Activated CD4-positive, alpha-beta T cell treated with anti-CD3 and anti-CD28 coated beads, Interleukin-2, amount 10 ng/mL, durations not matched to agents 24 days and 14 days (primary cell): ENCODE measurements at regions of chr6 and their contacts with region 1.

Region 1: DNA sequence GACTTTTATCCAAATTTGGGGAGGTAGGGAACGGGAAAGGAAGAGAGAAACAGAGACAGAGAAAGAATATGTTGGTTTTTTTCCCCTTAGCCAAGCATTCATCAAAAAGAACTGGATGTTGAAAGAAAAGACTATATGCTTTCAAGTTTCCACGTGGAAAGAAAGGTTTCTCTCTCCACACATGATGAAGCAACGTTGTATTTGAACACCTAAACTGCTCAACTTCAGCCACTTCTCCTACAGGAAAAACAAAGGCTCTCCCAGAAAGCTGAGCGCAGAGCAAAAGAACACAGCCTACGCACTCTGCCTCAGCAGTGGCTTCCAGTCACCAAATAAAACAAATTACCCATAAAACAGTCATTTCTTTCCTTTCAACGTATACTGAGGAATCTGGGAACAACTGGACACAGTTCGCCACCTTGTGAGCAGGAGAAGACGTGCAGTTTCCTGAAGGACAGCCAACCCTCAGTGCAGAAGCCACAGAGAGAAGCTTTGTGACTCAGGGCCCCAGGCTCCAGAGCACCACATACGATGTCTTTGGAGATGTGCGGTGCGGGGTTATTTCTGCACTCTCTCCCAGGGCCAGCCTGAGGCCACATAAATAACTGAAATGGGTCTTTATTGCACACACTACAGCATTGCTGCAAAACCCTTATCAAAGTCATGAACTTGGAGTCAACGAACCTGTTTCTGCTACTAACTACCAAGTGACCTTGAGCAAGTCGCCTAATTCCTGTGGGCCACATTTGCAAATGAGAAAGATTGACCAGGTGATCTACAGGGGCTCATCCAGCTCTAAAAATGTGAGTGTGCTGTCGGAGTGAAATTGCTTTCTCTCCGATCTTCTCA is 10.1 kb downstream of the IL17F start:
- DNase-seq: peak; percentile 63
- H3K4me3 Mint-ChIP-seq: no peak overlapping the region
- H3K27ac Mint-ChIP-seq: no peak overlapping the region
- H3K4me1 Mint-ChIP-seq: peaks cover 31% of the 10 kb centered on the region
- H3K27me3 Mint-ChIP-seq: peaks cover 67% of the 10 kb centered on the region

Region 2: DNA sequence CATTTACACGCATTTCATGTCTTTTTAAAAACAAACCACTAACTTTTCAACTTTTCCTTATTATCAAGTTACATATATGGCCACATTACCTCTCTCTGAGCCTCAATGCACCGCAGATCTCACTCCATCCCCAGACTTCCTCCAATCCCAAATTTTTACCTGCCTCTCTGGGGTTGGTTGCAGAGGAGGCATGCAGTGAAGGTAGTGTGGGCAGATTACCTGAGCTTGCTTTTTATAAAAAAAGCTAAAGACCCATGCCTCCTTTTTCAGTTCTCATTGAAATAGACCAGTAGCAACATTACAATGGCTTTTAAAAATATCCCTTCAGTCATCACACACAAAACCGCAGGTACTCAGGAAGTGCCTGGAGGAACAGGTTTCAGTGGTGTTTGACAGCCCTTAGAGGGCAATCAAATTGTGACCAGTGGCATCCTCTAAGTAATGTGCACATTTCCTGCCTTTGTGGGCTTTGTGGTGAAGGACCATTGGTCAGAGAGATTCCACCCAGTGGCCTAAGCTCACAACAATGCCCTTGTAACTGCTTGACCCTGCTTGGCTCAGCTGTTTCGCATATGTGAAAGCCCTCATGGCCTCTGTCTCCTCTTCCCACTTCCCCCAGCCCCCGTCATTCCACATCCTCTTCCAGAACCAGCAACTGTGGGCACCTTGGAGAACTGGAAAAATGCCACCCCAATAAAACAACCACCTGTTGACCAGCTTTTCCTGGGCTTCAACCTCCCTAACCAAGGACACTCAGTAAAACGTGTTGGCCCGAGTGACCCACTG is 78.2 kb before region 1 on chr6:
- intact Hi-C with region 1: loop called (anchors 1 kb)
- DNase-seq: no peak
- H3K4me3 Mint-ChIP-seq: no peak overlapping the region
- H3K27ac Mint-ChIP-seq: peak overlapping the region; percentile 8
- H3K4me1 Mint-ChIP-seq: peaks cover 21% of the 10 kb centered on the region
- H3K27me3 Mint-ChIP-seq: peaks cover 15% of the 10 kb centered on the region

Region 3: DNA sequence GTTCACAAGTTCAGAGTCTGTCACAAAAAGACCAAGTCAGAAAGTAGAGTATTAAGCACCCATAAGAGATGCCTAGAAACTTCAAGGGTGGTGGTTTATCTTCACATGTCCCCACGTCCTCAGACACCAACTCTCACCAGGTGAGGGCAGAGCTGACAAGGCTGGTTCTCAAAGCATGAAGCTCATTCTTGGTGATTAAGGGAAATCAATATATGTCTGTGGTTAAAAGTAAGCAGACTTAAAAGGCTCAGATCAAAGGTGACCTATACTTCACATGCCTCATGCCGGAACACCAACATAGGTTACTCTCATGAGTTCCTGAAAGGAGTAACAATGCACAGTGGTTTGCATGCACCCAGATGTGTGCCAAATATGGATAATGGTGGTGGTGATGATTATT is 21.1 kb before region 1 on chr6:
- intact Hi-C with region 1: loop called (anchors 2 kb)
- DNase-seq: peak; percentile 65
- H3K4me3 Mint-ChIP-seq: no peak overlapping the region
- H3K27ac Mint-ChIP-seq: no peak overlapping the region
- H3K4me1 Mint-ChIP-seq: peaks cover 7% of the 10 kb centered on the region
- H3K27me3 Mint-ChIP-seq: peaks cover 34% of the 10 kb centered on the region